ENCODE measurements at regions of chr15 and their contacts with region 1.

Region 1: DNA sequence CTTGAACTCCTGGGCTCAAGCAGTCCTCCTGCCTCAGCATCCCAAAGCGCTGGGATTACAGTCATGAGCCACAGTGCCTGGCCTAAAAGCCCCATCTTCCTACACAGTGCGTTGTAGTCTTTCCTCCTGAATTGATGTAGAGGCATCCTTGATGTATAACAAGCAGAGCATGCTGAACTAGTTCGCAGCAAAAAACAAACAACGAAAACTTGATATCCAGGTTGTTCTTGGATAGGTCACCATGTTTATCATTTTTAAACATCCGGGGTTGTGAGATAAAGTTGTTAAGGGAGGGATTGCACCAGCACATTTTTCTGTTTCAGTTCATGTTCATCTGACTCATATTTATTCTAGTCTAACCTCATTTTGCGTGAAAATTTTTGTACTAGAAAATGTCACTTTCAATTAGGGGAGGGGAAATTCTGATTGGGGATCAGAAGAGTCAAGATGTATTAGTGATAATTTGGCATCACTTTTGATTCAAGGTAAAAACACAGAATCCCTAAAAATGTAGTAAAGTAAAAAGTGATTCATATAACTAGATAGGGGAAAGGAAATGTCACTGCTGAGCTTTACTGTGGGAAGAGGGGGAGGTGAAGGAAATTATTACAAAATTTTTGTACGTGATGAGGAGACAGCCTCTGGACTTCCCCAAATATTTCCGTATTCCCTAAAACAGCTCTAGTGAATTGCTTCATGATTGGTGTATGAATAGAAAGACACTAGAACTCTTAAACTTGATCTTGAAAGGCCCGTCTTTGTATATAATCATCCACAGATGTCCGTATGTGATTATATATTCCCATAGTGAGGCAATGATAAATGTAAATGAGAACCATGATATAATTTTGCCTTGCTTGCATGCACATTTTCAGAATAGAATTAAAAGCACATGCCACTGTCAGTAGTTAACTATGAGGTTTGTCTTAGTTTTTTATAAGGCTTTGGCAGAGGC is 22.9 kb downstream of the RAB8B start:
- DNase-seq: no peak
- H3K4me3 Mint-ChIP-seq: peak overlapping the region; percentile 79
- H3K27ac Mint-ChIP-seq: peak overlapping the region; percentile 98
- H3K4me1 Mint-ChIP-seq: peaks cover 68% of the 10 kb centered on the region
- H3K27me3 Mint-ChIP-seq: no peaks in the 10 kb centered on the region

Region 2: GRCh38 chr15:63122002-63122893 is 90.1 kb before region 1 on chr15:
- intact Hi-C with region 1: loop called (anchors 1 kb)
- DNase-seq: peak; percentile 83
- H3K4me3 Mint-ChIP-seq: peak overlapping the region; percentile 93
- H3K27ac Mint-ChIP-seq: peak overlapping the region; percentile 83
- H3K4me1 Mint-ChIP-seq: peaks cover 21% of the 10 kb centered on the region
- H3K27me3 Mint-ChIP-seq: no peaks in the 10 kb centered on the region

Region 3: GRCh38 chr15:63157118-63157843 is 55.0 kb before region 1 on chr15 and contains the start of gene RPS27L:
- intact Hi-C with region 1: loop called (anchors 2 kb)
- DNase-seq: peak; percentile 86
- H3K4me3 Mint-ChIP-seq: peak within 1 kb of the TSS; percentile 98
- H3K27ac Mint-ChIP-seq: peak within 1 kb of the TSS; percentile 98
- H3K4me1 Mint-ChIP-seq: peaks cover 21% of the 10 kb centered on the region
- H3K27me3 Mint-ChIP-seq: no peaks in the 10 kb centered on the region
- total RNA-seq, gene RPS27L: 163 and 164 TPM in 2 replicates

Region 4: DNA sequence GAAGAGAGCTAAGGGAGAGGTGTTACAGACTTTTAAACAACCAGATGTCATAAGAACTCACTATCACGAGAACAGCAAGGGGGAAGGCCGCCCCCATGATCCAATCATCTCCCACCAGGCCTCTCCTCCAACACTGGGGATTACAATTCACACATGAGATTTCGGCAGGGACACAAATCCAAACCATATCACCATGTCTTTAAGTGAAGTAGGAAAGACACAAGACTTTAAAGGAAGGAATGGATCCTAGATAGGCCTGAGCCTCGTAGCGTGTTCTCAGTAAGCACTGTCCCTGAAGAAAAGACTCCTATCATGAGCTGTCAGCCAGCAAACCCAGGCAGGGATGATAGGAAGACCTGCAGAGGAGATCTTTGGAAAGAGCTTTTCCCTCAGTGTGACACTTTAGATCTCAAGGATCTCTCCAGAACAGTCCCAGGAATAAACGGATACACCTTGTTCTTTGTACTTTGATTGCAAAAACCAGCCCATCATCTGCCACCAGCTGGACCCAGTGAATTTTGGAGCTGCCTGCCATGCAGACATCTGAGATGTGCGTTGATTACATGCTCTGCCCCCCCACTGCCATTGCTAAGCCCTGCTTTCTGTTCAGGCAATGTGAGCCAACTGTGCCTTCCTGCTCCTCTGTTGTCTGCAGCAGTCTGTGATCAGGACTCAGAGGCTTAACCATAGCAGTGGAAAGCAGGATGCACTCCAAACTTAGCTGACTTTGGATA is 39.8 kb before region 1 on chr15:
- intact Hi-C with region 1: loop called (anchors 1 kb)
- DNase-seq: no peak
- H3K4me3 Mint-ChIP-seq: no peak overlapping the region
- H3K27ac Mint-ChIP-seq: no peak overlapping the region
- H3K4me1 Mint-ChIP-seq: peaks cover 7% of the 10 kb centered on the region
- H3K27me3 Mint-ChIP-seq: no peaks in the 10 kb centered on the region

Region 5: DNA sequence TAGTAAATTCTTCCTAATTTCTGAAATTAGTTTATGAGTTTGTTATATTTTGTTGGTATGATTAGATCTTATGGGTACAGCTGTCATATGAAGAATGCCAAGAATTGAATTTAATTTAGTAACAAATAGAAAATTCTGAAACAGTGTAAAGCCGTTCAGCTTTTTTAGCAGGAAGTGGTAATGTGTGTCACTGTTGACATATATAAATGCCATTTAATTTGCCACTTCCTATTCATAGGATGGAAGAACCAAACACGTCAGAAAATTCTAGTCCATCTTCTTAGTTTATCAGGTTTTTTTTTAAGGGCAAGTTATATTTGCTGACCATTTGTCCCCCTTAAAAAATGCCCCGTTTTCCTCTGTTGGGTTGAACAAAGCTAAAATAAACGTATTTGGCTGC is 20.1 kb after region 1 on chr15:
- intact Hi-C with region 1: loop called (anchors 1 kb)
- DNase-seq: no peak
- H3K4me3 Mint-ChIP-seq: peak overlapping the region; percentile 47
- H3K27ac Mint-ChIP-seq: peak overlapping the region; percentile 72
- H3K4me1 Mint-ChIP-seq: peaks cover 63% of the 10 kb centered on the region
- H3K27me3 Mint-ChIP-seq: no peaks in the 10 kb centered on the region

Region 6: DNA sequence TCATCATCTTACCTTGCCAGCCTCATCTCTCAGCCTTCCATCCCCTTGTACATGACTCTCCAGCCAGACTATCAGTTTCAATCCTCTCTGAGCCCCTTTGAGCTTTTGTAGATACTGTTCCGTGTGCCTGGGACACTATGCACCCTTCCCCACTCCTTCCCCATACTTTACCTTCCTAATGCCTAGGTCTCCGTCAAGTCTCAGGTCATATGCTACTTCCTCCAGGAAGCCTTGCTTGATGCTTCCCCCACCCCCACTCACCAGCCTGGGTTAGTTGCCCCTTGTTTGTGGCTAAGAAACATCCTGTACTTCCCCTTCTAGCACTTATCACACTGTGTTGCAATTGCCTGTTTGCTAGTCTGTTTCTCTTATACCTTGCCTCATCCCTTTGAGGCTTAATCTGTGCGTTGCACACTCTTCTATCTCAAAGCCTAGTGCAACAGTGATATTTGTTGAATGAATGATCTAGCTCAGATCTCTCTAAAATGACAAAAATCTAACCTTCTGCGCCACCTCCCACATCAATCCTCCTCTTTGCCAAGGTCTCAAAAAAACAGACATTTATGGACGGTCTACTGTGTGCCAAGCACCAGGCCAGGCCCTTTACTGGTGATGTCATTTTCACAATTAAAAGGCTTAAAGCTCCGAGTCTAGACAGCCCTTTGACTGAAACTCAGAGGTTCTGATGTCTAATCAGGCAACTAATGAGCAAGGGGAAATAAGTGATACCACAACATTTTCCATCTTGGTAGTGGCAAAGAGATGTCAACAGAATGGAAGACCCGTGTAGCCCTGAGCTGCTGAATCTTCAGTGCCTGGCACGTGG is 285.5 kb after region 1 on chr15:
- intact Hi-C with region 1: loop called (anchors 5 kb)
- DNase-seq: peak; percentile 59
- H3K4me3 Mint-ChIP-seq: no peak overlapping the region
- H3K27ac Mint-ChIP-seq: no peak overlapping the region
- H3K4me1 Mint-ChIP-seq: peaks cover 33% of the 10 kb centered on the region
- H3K27me3 Mint-ChIP-seq: no peaks in the 10 kb centered on the region